ENCODE measurements at regions of chr12 and their contacts with region 1.

Region 1: DNA sequence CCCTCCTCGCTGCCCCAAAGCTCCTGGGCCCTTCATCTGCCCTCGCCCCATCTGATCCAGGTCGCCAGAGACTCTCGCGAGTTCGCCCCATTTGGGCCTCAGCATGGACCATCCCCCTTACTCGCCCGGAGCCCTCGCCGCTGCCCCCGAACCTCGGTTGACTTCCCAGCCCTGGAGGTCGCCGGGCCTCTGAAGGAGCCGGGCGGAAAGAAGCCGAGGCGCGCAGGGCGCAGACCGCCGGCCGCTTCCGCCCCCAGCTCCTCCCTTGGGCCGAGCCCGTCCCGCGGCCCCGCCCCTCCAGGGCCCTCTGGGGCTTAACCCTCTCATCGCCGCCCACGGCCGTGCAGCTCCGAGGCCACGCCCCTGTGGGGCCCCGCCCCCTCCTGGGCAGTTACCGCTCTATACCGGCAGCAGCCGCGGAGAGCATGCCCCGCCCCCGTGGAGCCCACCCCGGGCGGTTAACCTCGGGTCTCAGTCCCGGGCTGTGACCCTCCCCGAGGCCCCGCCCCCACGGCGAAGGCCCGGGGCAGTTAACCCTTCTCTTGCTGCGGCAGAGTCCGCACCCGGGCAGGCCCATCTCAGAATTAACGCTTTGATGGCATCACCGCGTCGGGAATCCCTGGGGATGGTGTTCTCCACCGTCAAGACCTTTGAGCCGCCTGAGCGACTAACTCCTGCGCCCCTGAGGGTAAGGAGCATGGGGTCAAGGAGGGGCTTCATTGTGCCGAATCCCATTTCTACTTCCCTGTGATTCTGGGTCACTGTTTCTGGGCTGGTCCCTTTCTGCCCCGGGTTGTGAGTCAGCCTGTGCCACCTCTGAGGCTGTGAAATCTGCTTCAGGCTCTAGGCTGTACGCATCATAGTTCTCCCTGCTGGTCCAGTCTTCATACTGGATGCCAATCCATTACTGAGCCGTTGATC is at the start of gene SPSB2:
- DNase-seq: peak; percentile 100
- ATAC-seq: peak; percentile 75
- H3K4me3 Mint-ChIP-seq: peak within 1 kb of the TSS; percentile 89
- H3K27ac Mint-ChIP-seq: peak within 1 kb of the TSS; percentile 96
- H3K4me1 Mint-ChIP-seq: peaks cover 44% of the 10 kb centered on the region
- H3K27me3 Mint-ChIP-seq: no peaks in the 10 kb centered on the region
- CTCF ChIP-seq: no peak
- total RNA-seq, gene SPSB2: 21.2 to 25.5 TPM (median 22.7 TPM) in 3 replicates

Region 2: DNA sequence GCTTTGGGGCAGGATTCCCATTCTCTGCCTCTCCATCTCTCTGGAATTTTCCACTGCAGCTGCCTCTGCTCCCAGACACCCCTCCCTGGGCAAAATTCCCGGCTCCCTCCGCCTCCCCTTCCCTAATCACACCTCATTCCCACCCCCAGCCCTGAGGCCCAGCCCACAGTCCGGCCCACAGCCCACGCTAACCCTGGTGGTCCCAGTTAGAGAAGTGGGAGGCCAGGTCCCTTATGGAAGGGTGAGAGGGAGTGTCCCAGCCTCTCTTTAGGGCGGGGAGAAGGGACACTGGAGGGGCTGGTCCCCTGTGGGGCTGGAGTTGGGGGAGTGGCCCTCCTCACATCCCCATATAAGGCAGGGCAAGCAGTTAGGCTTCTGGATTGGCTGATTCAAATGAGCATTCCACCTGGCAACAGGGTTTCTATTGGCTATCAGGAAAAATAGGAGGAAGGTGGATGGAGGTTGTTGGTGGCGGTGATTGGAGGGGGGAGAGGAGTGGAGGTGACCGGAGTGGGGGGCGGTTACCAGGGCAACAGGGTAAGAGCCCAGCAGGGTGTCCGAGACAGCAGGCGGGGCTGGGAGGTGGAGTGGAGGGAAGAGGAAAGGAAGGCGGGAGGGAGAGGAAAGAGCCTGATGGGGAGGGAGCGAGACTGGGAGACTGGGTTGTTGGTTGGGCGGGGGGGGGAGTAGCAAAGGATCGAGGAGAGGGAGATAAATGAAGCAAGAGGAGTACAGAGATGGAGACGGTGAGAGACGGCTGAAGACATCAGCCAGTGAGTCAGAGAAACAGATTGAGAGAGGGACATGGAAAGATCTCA is 109.1 kb before region 1 on chr12:
- CTCF ChIA-PET with region 1: interaction called, 13 read pairs
- POLR2A ChIA-PET with region 1: interaction called, 7 read pairs
- DNase-seq: peak; percentile 96
- ATAC-seq: peak; percentile 56
- H3K4me3 Mint-ChIP-seq: peak overlapping the region; percentile 62
- H3K27ac Mint-ChIP-seq: peak overlapping the region; percentile 89
- H3K4me1 Mint-ChIP-seq: peaks cover 56% of the 10 kb centered on the region
- H3K27me3 Mint-ChIP-seq: peaks cover 7% of the 10 kb centered on the region
- CTCF ChIP-seq: no peak

Region 3: DNA sequence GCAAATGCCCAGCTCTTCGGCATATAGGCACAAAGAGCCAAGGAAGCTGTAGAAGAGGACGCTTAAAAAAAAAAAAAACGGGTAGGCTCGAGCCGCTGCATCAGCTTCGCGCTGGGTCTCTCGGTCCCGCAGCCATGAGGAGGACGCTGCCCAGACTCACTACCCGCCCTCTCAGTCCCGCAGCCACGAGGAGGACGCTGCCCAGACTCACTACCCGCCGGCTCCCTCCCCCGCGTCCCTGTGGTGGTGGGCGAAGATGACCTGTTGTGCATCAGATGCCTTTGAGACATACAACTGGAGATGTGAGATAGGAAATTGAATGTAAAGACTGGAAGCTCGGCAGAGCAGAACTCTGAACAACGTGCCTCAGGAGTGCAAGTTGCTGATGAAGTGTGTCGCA is 11.2 kb after region 1 on chr12:
- CTCF ChIA-PET with region 1: interaction called, 83 read pairs
- POLR2A ChIA-PET with region 1: interaction called, 3 read pairs
- DNase-seq: no peak
- ATAC-seq: peak; percentile 33; the same call in 1 of the 2 replicates
- H3K4me3 Mint-ChIP-seq: no peak overlapping the region
- H3K27ac Mint-ChIP-seq: peak overlapping the region; percentile 25
- H3K4me1 Mint-ChIP-seq: peaks cover 39% of the 10 kb centered on the region
- H3K27me3 Mint-ChIP-seq: no peaks in the 10 kb centered on the region
- CTCF ChIP-seq: no peak

Region 4: GRCh38 chr12:6914246-6914946 is 41.0 kb after region 1 on chr12 and contains the start of gene ENO2:
- CTCF ChIA-PET with region 1: interaction called, 45 read pairs
- POLR2A ChIA-PET with region 1: interaction called, 6 read pairs
- DNase-seq: peak; percentile 63
- ATAC-seq: peak; percentile 65
- H3K4me3 Mint-ChIP-seq: peak within 1 kb of the TSS; percentile 97
- H3K27ac Mint-ChIP-seq: peak within 1 kb of the TSS; percentile 64
- H3K4me1 Mint-ChIP-seq: peaks cover 33% of the 10 kb centered on the region
- H3K27me3 Mint-ChIP-seq: peaks cover 12% of the 10 kb centered on the region
- CTCF ChIP-seq: no peak
- total RNA-seq, gene ENO2: 118 to 170 TPM (median 165 TPM) in 3 replicates

Region 5: DNA sequence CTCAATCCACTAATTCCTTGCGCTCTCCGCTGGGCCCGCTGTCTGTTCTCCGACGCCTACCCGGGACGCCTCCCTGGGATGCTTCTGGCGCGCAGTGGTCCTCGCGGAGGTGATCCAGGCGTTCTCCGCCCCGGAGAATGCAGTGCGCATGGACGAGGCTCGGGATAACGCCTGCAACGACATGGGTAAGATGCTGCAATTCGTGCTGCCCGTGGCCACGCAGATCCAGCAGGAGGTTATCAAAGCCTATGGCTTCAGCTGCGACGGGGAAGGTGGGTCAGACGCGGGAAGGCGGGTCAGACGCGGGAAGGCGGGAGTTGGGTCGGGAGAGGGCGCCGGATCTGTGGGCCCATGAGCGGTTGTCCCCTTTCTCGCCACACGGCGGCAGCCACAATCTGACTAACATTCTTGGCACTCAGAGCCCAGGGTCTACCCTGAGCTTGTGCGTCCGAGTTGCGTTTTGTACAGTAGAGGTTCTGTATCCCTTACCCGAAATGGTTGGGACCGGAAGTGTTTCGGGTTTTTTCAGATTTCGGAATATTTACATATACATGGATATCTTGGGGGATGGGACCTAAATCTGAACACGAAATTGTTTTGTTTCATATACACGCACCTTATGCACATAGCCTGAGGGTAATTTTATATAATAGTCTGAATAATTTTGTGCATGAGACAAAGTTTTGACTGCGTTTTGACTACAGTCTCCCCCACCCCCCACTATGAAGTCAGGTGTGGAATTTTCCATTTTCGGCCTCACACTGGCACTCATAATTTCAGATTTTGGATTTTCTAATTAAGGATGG is 71.2 kb after region 1 on chr12:
- CTCF ChIA-PET with region 1: interaction called, 53 read pairs
- POLR2A ChIA-PET with region 1: interaction called, 38 read pairs
- DNase-seq: peak; percentile 92
- ATAC-seq: peak; percentile 25
- H3K4me3 Mint-ChIP-seq: peak overlapping the region; percentile 98
- H3K27ac Mint-ChIP-seq: peak overlapping the region; percentile 99
- H3K4me1 Mint-ChIP-seq: peaks cover 34% of the 10 kb centered on the region
- H3K27me3 Mint-ChIP-seq: no peaks in the 10 kb centered on the region
- CTCF ChIP-seq: no peak

Region 6: DNA sequence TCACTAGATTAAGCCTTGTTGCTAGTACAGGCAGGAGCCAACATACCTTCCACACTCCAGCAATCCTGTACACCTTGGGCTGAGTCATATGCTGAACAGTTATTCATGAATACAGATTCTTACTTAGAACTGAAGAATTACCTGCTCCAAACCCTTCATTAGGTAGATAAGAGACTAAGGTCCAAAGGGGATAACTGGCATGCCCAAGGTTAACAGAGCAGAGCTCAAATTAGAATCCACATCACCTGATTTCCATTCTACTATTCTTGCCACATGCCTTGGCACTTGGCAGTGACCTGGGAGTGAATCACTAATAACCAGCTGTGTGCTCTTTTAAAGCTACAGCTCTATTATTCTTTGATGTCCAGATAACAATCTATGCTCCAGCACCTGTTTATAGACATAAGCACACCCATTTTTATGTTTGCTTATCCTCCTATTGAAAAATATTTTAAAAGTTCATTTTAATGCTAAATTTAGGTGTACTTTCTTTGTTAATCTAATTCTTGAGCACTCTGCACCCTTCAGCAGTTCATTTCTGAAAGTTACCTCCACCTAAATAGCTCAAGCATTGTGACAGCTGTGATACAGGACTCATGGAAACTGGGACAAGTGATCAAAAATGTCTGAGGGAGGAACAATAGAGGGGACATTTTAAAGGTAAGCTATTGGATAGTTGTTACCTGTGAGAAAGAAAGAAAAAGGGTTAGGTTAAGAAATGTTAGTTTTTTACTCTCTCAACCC is 125.5 kb after region 1 on chr12:
- CTCF ChIA-PET with region 1: no interaction called
- POLR2A ChIA-PET with region 1: no interaction called
- DNase-seq: no peak
- ATAC-seq: no peak
- H3K4me3 Mint-ChIP-seq: no peak overlapping the region
- H3K27ac Mint-ChIP-seq: no peak overlapping the region
- H3K4me1 Mint-ChIP-seq: no peaks in the 10 kb centered on the region
- H3K27me3 Mint-ChIP-seq: no peaks in the 10 kb centered on the region
- CTCF ChIP-seq: no peak